Dorsolateral prefrontal cortex (tissue), 120 donors: ENCODE measurements at regions of chr2 and their contacts with region 1.

Region 1: DNA sequence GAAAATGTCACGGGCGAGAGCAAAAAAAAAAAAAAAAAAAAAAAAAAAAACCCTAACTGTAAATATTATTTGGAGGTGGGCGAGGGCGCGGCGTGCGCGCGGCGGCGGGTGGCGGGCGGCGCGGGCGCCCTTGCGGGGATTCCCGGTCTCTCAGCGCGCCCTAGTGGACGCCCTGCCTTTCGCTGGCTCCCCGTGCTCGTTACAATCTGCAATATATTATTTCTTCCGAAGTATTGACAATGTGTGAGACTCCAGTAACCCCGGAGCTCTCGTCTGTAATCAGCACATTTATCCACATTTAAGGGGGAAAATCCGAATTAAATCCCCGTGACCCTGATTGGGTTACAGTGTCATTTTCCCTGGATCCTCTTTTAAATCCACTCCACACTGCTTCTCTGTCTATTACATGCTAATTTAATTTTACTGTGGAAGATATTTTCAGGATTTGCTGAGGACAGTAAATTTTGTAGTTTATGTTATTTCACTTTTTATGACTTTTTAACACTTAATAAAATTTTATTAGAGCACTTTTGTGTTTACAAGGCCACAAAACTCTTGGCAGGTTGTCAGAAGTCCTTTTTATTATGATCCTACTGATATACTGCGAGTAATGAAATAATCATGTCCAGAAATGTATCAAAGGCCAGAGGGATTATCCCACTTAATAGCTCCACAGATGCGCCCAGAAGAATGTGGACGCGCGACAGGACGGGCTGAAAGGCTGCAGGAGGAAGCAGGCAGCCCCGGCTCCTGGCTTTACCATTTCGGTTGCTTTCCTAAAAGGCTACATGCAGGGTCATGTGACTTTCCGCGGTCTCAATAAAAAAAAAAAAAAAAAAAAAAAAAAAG is 369.1 kb downstream of the MTX2 start:
- DNase-seq: peak; percentile 41 to 77 (median 56)
- H3K4me3 ChIP-seq: peak overlapping the region; percentile 30 to 78 (median 62)
- H3K27ac ChIP-seq: peak overlapping the region in 1 of 59 donors; percentile 11
- H3K27me3 ChIP-seq: peaks cover 0 to 97% (median 73%) of the 10 kb centered on the region in 45 donors
- CTCF ChIP-seq: peak; percentile 50 to 86 (median 76)

Region 2: GRCh38 chr2:175251425-175252041 is 1386.9 kb before region 1 on chr2:
- intact Hi-C with region 1: loop called in 1 of 2 experiments (anchors 5 kb)
- DNase-seq: no peak
- H3K4me3 ChIP-seq: no peak overlapping the region
- H3K27ac ChIP-seq: no peak overlapping the region
- H3K27me3 ChIP-seq: peaks cover 0 to 52% (median 5%) of the 10 kb centered on the region in 45 donors
- CTCF ChIP-seq: peak; percentile 46 to 78 (median 66)

Region 3: GRCh38 chr2:176126929-176127773 is 511.2 kb before region 1 on chr2:
- intact Hi-C with region 1: loop called (anchors 1 to 5 kb)
- DNase-seq: peak in 9 of 10 donors; percentile 47 to 74 (median 63)
- H3K4me3 ChIP-seq: no peak overlapping the region
- H3K27ac ChIP-seq: no peak overlapping the region
- H3K27me3 ChIP-seq: peaks cover 22 to 100% (median 95%) of the 10 kb centered on the region in 45 donors
- CTCF ChIP-seq: peak; percentile 73 to 98 (median 90)

Region 4: GRCh38 chr2:176454893-176455811 is 183.2 kb before region 1 on chr2:
- intact Hi-C with region 1: loop called (anchors 5 to 10 kb)
- DNase-seq: peak; percentile 67 to 95 (median 86)
- H3K4me3 ChIP-seq: no peak overlapping the region
- H3K27ac ChIP-seq: peak overlapping the region in 25 of 59 donors; percentile 1 to 61 (median 37)
- H3K27me3 ChIP-seq: peaks cover 0 to 34% (median 0%) of the 10 kb centered on the region in 45 donors
- CTCF ChIP-seq: peak in 55 of 56 donors; percentile 89 to 99 (median 96)

Region 5: DNA sequence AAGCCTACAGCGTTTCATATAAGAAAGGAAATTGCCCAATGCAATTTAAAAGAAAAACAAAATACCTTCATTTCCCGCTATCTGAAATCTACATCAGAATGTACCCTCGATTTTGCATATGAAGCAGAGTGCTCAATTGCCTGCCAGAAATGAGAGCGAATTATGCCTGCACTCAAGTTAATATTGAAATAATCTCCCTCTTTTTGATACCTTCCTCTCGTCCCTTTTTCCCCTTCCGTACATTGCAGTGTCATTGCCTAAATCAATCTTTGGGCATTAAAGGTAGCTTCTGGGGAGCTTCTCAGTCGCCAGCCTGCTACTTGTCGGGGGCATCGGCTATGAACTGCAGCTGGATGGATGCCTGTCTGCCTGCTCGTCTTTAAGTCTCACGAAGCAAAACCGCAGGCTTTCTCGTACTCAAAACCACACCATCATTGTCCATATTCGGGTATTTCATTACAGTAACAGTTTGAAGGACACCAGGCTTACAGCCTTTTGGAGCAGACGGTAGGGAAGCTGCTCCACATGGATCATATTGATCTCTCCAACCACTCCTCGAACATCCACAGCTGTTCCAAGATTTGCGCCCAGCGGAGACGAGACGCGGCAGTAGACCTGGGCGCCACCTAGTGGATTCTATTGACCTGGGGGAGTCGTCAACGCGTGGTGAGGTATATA is 510.2 kb after region 1 on chr2:
- intact Hi-C with region 1: loop called in 1 of 2 experiments (anchors 5 kb)
- DNase-seq: peak in 9 of 10 donors; percentile 49 to 78 (median 69)
- H3K4me3 ChIP-seq: peak overlapping the region; percentile 27 to 73 (median 54)
- H3K27ac ChIP-seq: peak overlapping the region in 2 of 59 donors; percentile 14 to 46
- H3K27me3 ChIP-seq: peaks cover 0 to 47% (median 12%) of the 10 kb centered on the region in 45 donors
- CTCF ChIP-seq: peak; percentile 46 to 88 (median 74)